Mammary epithelial cell (primary cell): ENCODE measurements at regions of chr1 and their contacts with region 1.

Region 1: GRCh38 chr1:168187177-168187576 is 8.4 kb downstream of the TIPRL start:
- DNase-seq: no peak
- H3K4me3 ChIP-seq: no peak overlapping the region
- H3K27ac ChIP-seq: no peak overlapping the region
- H3K4me1 ChIP-seq: no peaks in the 10 kb centered on the region
- H3K27me3 ChIP-seq: no peaks in the 10 kb centered on the region
- CTCF ChIP-seq: no peak

Region 2: GRCh38 chr1:168161459-168161858 is 25.7 kb before region 1 on chr1:
- CTCF ChIA-PET with region 1: no interaction called
- dilution Hi-C with region 1: no loop called
- in situ Hi-C with region 1: no loop called
- intact Hi-C with region 1: no loop called
- DNase-seq: no peak
- H3K4me3 ChIP-seq: no peak overlapping the region
- H3K27ac ChIP-seq: no peak overlapping the region
- H3K4me1 ChIP-seq: no peaks in the 10 kb centered on the region
- H3K27me3 ChIP-seq: no peaks in the 10 kb centered on the region
- CTCF ChIP-seq: no peak

Region 3: GRCh38 chr1:168172250-168172915 is 14.8 kb before region 1 on chr1:
- CTCF ChIA-PET with region 1: interaction called, 17 read pairs
- dilution Hi-C with region 1: no loop called
- in situ Hi-C with region 1: no loop called
- intact Hi-C with region 1: no loop called
- DNase-seq: no peak
- H3K4me3 ChIP-seq: no peak overlapping the region
- H3K27ac ChIP-seq: no peak overlapping the region
- H3K4me1 ChIP-seq: no peaks in the 10 kb centered on the region
- H3K27me3 ChIP-seq: no peaks in the 10 kb centered on the region
- CTCF ChIP-seq: no peak

Region 4: DNA sequence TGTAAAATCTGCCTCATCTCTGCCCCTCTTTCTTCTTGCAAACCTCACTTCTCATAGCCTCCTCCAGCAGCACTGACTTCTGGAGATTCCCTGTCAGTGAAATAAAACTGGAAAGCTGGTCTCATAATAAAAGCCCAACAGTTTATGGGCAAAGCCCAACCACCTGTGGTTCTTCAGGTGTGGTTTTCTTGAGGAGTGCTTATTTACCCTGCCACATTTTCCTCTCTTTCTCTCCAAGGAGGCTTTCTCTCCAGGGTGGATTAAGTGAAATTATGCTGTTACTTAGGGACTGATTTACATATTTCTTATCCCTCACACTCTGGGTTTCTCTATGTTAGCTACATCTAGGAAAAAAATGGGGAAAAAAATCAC is 98.2 kb after region 1 on chr1:
- CTCF ChIA-PET with region 1: no interaction called
- dilution Hi-C with region 1: no loop called
- in situ Hi-C with region 1: no loop called
- intact Hi-C with region 1: no loop called
- DNase-seq: peak; percentile 81
- H3K4me3 ChIP-seq: no peak overlapping the region
- H3K27ac ChIP-seq: no peak overlapping the region
- H3K4me1 ChIP-seq: peaks cover 25% of the 10 kb centered on the region
- H3K27me3 ChIP-seq: no peaks in the 10 kb centered on the region
- CTCF ChIP-seq: no peak